GM10248 (cell line): ENCODE measurements at regions of chr10 and their contacts with region 1.

Region 1: DNA sequence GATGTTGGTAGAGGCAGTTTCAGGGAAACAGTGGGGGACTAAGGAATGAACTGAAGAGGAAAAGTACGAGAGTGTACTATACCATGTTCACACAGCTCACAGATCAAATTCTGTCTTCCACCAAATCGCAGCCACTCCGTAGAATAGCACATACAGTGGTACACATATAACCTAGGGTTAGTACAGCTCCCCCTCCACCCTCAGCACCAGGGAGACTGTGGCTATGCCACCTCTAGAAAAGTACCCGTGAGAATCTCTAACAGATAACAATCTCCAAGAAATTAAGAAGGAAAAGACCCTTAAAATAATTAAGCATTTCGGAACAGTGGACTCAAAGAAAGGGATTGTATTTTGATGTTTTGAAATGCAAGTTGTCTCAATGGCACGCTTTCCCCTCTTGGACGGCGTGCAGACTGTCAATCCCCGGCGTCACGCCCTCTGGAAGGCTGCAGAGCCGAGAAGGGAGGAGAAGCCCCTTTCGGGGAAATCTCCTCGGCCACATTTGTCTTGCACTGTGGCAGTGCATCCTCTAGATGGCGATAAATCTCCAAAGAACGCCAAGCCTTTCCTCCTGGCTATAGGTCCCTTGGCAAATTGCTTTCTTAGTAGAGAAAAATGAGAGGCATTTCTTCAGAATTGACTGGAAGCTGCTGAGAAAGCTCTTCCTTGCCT is 345.0 kb downstream of the REEP3 start:
- DNase-seq: peak; percentile 72
- CTCF ChIP-seq: peak; percentile 97

Region 2: DNA sequence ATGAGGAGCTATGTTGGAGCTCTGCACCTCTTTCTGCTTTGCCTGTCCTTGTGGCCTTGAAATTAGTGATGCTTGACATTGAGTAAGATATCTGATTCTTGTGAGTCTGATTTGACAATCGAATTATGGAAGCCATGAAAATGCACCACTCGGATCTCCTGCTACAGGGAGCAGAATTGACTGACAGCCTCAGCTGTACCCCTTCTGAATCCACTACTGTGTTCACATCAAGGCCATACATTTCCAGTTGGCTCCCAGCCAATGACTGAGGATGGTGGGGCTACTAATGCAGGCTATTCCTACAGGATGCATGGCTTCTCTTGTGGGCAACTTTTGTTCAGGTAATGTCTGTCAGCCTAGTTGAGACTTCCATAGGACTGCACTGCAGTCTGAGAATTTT is 23.1 kb before region 1 on chr10:
- CTCF ChIA-PET with region 1: interaction called, 10 read pairs
- POLR2A ChIA-PET with region 1: no interaction called
- DNase-seq: no peak
- CTCF ChIP-seq: no peak

Region 3: GRCh38 chr10:63878428-63878827 is 12.2 kb after region 1 on chr10:
- CTCF ChIA-PET with region 1: interaction called, 14 read pairs
- POLR2A ChIA-PET with region 1: no interaction called
- DNase-seq: no peak
- CTCF ChIP-seq: no peak

Region 4: GRCh38 chr10:63883861-63884260 is 17.6 kb after region 1 on chr10:
- CTCF ChIA-PET with region 1: interaction called, 12 read pairs
- POLR2A ChIA-PET with region 1: no interaction called
- DNase-seq: no peak
- CTCF ChIP-seq: no peak

Region 5: GRCh38 chr10:63976538-63976937 is 110.3 kb after region 1 on chr10:
- CTCF ChIA-PET with region 1: interaction called, 24 read pairs
- POLR2A ChIA-PET with region 1: no interaction called
- DNase-seq: peak; percentile 58
- CTCF ChIP-seq: peak; percentile 50

Region 6: DNA sequence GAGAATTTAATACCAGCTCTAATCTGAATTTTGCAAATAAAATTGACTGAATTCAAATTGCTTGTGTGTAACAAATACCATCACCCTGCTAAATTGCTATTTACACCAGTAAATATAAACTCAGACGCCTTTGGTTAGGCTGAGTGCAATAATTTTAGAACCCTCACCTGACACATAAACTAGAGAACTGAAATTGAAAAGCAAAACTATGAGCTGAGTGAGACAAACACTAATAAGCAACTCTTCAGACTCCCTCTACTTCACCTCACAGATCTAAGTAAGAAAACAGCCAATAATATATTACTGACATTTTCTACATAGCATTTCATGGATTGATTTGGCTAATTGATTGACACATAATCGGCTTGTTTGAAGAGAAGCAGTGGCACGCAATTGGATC is 276.2 kb after region 1 on chr10:
- CTCF ChIA-PET with region 1: no interaction called
- POLR2A ChIA-PET with region 1: no interaction called
- DNase-seq: no peak
- CTCF ChIP-seq: no peak